ENCODE measurements at regions of chr6 and their contacts with region 1.

Region 1: GRCh38 chr6:134063966-134064445 is 11.6 kb upstream of the SLC2A12 start:
- DNase-seq: peak; percentile 67
- H3K4me3 Mint-ChIP-seq: no peak overlapping the region
- H3K27ac Mint-ChIP-seq: no peak overlapping the region
- H3K4me1 Mint-ChIP-seq: no peaks in the 10 kb centered on the region
- H3K27me3 Mint-ChIP-seq: no peaks in the 10 kb centered on the region

Region 2: DNA sequence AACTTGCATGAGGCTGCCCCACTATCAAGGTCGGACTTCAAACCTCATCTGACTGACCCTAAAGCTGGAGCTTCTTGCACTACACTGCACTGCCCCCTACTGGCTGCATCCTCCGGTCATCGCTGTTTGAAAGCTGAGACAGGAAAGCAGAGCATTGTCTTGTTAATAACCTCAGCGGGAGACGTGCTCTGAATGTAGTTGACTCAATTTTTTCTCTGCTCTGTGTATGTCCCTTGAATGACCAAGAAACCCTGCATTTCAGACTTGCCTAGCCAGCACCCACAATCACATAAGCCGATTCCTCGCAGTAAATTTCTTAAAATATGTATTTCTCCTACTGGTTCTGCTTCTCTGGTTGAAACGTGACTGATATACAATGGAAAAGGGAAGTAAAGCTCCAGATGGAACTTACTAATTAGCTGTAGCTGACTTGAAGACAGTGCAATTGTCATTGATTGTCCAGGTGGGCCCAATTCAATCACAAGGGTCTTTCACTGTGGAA is 147.3 kb before region 1 on chr6:
- CTCF ChIA-PET with region 1: interaction called, 207 read pairs
- POLR2A ChIA-PET with region 1: no interaction called
- intact Hi-C with region 1: no loop called
- DNase-seq: peak; percentile 84
- H3K4me3 Mint-ChIP-seq: no peak overlapping the region
- H3K27ac Mint-ChIP-seq: no peak overlapping the region
- H3K4me1 Mint-ChIP-seq: peaks cover 4% of the 10 kb centered on the region
- H3K27me3 Mint-ChIP-seq: peaks cover 7% of the 10 kb centered on the region

Region 3: DNA sequence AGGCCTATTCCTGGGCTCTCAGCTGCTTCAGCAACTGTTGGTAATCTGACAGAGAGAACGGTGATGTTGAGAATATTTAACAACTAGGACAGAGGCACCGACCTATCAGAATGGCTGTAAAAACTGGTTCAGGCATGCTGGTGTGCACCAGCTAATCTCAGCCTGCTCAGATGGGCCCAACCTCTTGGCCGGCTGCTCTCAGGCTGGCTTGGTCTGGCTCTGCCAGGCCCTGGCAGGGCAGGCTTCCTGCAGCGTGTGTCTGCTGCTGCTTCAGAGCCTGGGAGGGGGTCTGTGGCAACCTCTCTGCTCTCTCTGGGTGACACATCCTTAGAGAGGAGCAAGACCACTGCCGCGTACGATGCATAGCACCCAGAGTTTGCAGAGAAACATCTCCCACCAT is 16.3 kb before region 1 on chr6:
- CTCF ChIA-PET with region 1: interaction called, 34 read pairs
- POLR2A ChIA-PET with region 1: no interaction called
- intact Hi-C with region 1: loop called (anchors 1 kb)
- DNase-seq: no peak
- H3K4me3 Mint-ChIP-seq: no peak overlapping the region
- H3K27ac Mint-ChIP-seq: no peak overlapping the region
- H3K4me1 Mint-ChIP-seq: peaks cover 7% of the 10 kb centered on the region
- H3K27me3 Mint-ChIP-seq: peaks cover 12% of the 10 kb centered on the region

Region 4: GRCh38 chr6:134080171-134080795 is 16.3 kb after region 1 on chr6:
- CTCF ChIA-PET with region 1: interaction called, 19 read pairs
- POLR2A ChIA-PET with region 1: no interaction called
- intact Hi-C with region 1: no loop called
- DNase-seq: no peak
- H3K4me3 Mint-ChIP-seq: no peak overlapping the region
- H3K27ac Mint-ChIP-seq: no peak overlapping the region
- H3K4me1 Mint-ChIP-seq: peaks cover 12% of the 10 kb centered on the region
- H3K27me3 Mint-ChIP-seq: no peaks in the 10 kb centered on the region

Region 5: GRCh38 chr6:134247231-134247833 is 183.3 kb after region 1 on chr6:
- CTCF ChIA-PET with region 1: no interaction called
- POLR2A ChIA-PET with region 1: no interaction called
- intact Hi-C with region 1: no loop called
- DNase-seq: peak; percentile 86
- H3K4me3 Mint-ChIP-seq: peak overlapping the region; percentile 20
- H3K27ac Mint-ChIP-seq: peak overlapping the region; percentile 86
- H3K4me1 Mint-ChIP-seq: peaks cover 51% of the 10 kb centered on the region
- H3K27me3 Mint-ChIP-seq: no peaks in the 10 kb centered on the region